GM12878 (cell line): ENCODE measurements at regions of chr21 and their contacts with region 1.

Region 1: DNA sequence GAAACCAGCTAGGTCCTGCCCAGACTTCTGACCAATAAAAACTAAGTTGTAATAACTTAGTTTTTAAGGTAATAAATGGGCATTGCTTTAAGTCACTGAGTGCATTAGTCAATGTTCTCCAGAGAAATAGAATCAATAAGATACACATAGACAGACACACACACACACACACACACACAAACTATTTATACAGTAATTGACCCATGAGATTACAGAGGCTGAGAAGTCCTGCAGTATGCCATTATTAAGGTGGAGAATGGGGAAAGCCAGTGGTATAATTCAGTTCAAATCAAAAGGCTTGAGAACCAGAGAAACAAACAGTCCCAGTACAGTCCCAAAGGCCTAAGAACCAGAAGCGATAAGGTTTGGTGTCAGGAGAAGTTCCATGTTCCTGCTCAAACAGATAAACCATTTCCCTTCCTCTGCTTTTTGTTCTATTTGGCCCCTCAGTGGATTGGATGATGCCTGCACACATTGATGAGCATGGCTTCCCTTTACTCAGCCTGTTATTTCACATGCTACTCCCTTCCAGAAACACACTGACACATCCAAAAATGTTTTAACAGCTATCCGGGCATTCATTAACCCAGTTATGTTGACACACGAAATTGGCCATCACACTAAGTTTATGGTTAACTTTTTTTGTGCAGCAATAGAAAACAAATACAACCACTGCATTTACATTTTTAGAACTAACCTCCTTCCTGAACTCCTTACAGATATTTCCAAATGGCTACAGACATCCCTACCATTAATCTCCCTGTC is 828.2 kb upstream of the NCAM2 start:
- DNase-seq: no peak
- ATAC-seq: no peak
- H3K4me3 ChIP-seq: no peak overlapping the region
- H3K27ac ChIP-seq: no peak overlapping the region
- H3K4me1 ChIP-seq: no peaks in the 10 kb centered on the region
- H3K27me3 ChIP-seq: no peaks in the 10 kb centered on the region
- CTCF ChIP-seq: no peak
- EP300 ChIP-seq: no peak
- POLR2A ChIP-seq: no peak
- RAD21 ChIP-seq: no peak

Region 2: GRCh38 chr21:20108016-20108415 is 62.0 kb before region 1 on chr21:
- CTCF ChIA-PET with region 1: no interaction called
- POLR2A ChIA-PET with region 1: no interaction called
- RAD21 ChIA-PET with region 1: no interaction called
- SMC1A ChIA-PET with region 1: no interaction called
- in situ Hi-C with region 1: loop called (anchors 10 kb)
- intact Hi-C with region 1: no loop called
- DNase-seq: no peak
- ATAC-seq: no peak
- H3K4me3 ChIP-seq: no peak overlapping the region
- H3K27ac ChIP-seq: no peak overlapping the region
- H3K4me1 ChIP-seq: no peaks in the 10 kb centered on the region
- H3K27me3 ChIP-seq: no peaks in the 10 kb centered on the region
- CTCF ChIP-seq: no peak
- EP300 ChIP-seq: no peak
- POLR2A ChIP-seq: no peak
- RAD21 ChIP-seq: no peak